ENCODE measurements at regions of chr3 and their contacts with region 1.

Region 1: DNA sequence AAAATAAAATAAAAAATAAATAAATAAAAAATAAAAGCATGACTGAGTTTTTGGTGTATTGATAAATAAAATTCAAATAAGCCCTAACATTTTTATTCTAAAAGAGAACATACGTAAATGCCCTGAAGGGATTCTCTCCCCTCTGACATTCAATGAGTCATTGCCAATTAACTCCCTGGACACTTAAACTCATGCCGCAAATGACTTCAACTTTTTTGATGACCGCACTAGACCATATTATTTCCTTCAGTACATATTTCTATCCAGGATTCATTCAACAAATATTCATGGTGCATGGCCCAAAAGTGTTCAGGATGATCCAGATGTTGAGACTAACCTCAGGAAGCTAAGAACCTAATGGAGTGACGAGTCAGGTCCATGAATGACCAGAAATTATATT is 195.9 kb upstream of the LRRN1 start:
- DNase-seq: no peak
- H3K4me3 ChIP-seq: no peak overlapping the region
- H3K4me3 Mint-ChIP-seq: no peak overlapping the region
- H3K27ac Mint-ChIP-seq: no peak overlapping the region
- H3K4me1 ChIP-seq: no peaks in the 10 kb centered on the region
- H3K4me1 Mint-ChIP-seq: no peaks in the 10 kb centered on the region
- H3K27me3 ChIP-seq: no peaks in the 10 kb centered on the region
- H3K27me3 Mint-ChIP-seq: no peaks in the 10 kb centered on the region
- CTCF ChIP-seq: no peak

Region 2: DNA sequence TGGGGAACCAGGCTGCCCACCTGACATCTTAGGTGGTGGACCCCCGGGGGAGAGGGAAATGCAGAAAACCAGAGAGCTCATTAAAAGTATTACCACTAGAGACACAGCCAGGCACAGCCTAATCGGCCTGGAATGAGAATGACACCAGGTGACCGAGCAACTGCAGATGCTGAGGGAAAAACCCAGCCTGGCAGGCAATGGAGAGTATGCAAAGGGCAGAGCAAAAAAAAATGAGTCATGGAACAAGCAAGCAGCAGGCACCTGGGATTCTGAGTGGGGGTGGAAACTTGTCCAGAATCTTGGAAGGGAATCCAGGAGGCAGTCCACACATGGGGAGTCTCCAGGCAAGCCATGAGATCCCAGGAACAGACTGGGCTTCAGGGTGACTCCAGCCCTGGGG is 12.2 kb after region 1 on chr3:
- CTCF ChIA-PET with region 1: no interaction called
- POLR2A ChIA-PET with region 1: no interaction called
- intact Hi-C with region 1: no loop called
- DNase-seq: no peak
- H3K4me3 ChIP-seq: no peak overlapping the region
- H3K4me3 Mint-ChIP-seq: no peak overlapping the region
- H3K27ac Mint-ChIP-seq: no peak overlapping the region
- H3K4me1 ChIP-seq: no peaks in the 10 kb centered on the region
- H3K4me1 Mint-ChIP-seq: no peaks in the 10 kb centered on the region
- H3K27me3 ChIP-seq: no peaks in the 10 kb centered on the region
- H3K27me3 Mint-ChIP-seq: peaks cover 5% of the 10 kb centered on the region
- CTCF ChIP-seq: no peak

Region 3: DNA sequence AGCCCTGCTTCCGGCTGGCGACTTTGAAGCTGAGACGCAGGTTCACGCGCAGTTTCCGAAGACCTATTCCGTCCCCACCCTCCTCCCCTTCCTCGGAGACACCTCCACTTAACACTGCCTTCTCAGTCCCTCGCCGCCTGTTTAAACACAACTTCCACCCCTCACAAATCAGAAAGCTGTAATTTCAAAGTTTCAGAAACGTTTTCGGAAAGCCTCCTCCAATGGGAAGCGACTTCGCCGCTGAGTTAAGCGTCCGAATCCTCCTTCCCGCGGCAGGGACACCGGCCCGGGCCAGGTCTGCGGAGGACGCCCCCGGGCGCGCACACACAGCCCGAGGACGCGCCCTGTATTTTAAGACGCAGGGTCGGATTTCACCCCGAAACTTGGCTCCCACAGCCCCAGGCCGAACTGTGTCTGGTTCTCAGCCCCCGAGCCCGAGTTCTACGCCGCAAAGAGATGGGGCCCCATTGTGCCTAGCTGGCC is 195.3 kb after region 1 on chr3:
- CTCF ChIA-PET with region 1: no interaction called
- POLR2A ChIA-PET with region 1: no interaction called
- intact Hi-C with region 1: loop called (anchors 1 kb)
- DNase-seq: peak in 1 of 2 experiments; percentile 5
- H3K4me3 ChIP-seq: peak overlapping the region; percentile 40
- H3K4me3 Mint-ChIP-seq: peak overlapping the region; percentile 75
- H3K27ac Mint-ChIP-seq: no peak overlapping the region
- H3K4me1 ChIP-seq: no peaks in the 10 kb centered on the region
- H3K4me1 Mint-ChIP-seq: no peaks in the 10 kb centered on the region
- H3K27me3 ChIP-seq: no peaks in the 10 kb centered on the region
- H3K27me3 Mint-ChIP-seq: peaks cover 8% of the 10 kb centered on the region
- CTCF ChIP-seq: no peak

Region 4: DNA sequence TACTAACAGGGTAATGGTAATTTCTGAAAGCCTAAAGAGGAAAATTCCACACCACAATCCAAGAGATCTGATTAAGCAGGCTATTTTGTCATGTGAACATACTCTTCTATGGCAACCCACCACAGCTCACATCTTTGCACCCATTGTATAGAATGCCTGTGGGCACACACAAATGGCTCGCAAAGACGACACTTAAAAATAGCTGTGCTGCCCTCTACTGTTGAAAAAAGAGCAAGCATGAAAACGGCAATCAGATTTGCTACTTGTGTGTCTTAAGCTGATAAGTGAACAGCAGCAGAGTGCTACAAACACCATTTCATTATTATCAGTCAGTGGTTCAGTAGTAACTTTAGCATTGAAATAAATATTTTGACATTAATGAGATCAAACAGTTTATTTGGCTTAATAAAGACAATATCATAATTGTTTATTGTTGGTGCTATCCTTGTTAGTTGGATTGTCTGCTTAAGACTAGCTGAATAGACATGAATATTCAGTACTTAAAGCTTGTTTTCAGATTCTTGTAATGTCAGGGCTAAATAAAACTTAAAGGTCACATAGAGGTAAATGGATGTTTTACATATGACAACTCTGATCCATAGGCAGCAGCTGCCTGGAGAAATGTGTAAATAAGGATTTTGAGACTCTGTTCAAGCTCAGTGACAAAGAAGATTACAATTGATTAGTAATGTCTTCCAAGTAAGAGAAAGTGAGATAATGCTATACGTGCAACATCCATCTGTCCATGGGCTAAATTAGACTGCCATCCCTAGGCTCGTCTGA is 395.0 kb after region 1 on chr3:
- CTCF ChIA-PET with region 1: interaction called, 6 read pairs
- POLR2A ChIA-PET with region 1: no interaction called
- intact Hi-C with region 1: loop called (anchors 1 kb)
- DNase-seq: peak; percentile 38 to 44
- H3K4me3 ChIP-seq: no peak overlapping the region
- H3K4me3 Mint-ChIP-seq: no peak overlapping the region
- H3K27ac Mint-ChIP-seq: no peak overlapping the region
- H3K4me1 ChIP-seq: no peaks in the 10 kb centered on the region
- H3K4me1 Mint-ChIP-seq: peaks cover 8% of the 10 kb centered on the region
- H3K27me3 ChIP-seq: no peaks in the 10 kb centered on the region
- H3K27me3 Mint-ChIP-seq: no peaks in the 10 kb centered on the region
- CTCF ChIP-seq: peak; percentile 40 to 60

Region 5: GRCh38 chr3:4271834-4272233 is 668.5 kb after region 1 on chr3:
- CTCF ChIA-PET with region 1: no interaction called
- POLR2A ChIA-PET with region 1: no interaction called
- intact Hi-C with region 1: loop called (anchors 10 kb)
- DNase-seq: peak in 1 of 2 experiments; percentile 21
- H3K4me3 ChIP-seq: no peak overlapping the region
- H3K4me3 Mint-ChIP-seq: no peak overlapping the region
- H3K27ac Mint-ChIP-seq: no peak overlapping the region
- H3K4me1 ChIP-seq: no peaks in the 10 kb centered on the region
- H3K4me1 Mint-ChIP-seq: no peaks in the 10 kb centered on the region
- H3K27me3 ChIP-seq: no peaks in the 10 kb centered on the region
- H3K27me3 Mint-ChIP-seq: peaks cover 5% of the 10 kb centered on the region
- CTCF ChIP-seq: peak; percentile 57 to 65

Region 6: GRCh38 chr3:4290272-4290893 is 687.0 kb after region 1 on chr3:
- CTCF ChIA-PET with region 1: no interaction called
- POLR2A ChIA-PET with region 1: no interaction called
- intact Hi-C with region 1: loop called (anchors 1 kb)
- DNase-seq: peak in 1 of 2 experiments; percentile 31
- H3K4me3 ChIP-seq: no peak overlapping the region
- H3K4me3 Mint-ChIP-seq: no peak overlapping the region
- H3K27ac Mint-ChIP-seq: no peak overlapping the region
- H3K4me1 ChIP-seq: no peaks in the 10 kb centered on the region
- H3K4me1 Mint-ChIP-seq: no peaks in the 10 kb centered on the region
- H3K27me3 ChIP-seq: no peaks in the 10 kb centered on the region
- H3K27me3 Mint-ChIP-seq: peaks cover 4% of the 10 kb centered on the region
- CTCF ChIP-seq: peak; percentile 72 to 81

Measured in Caco-2 (cell line).